Kidney (tissue), 22 donors: ENCODE measurements at regions of chr1 and their contacts with region 1.

Region 1: GRCh38 chr1:19651141-19651737 is 7.1 kb downstream of the NBL1 start:
- DNase-seq: peak in 4 of 5 donors; percentile 63 to 86 (median 75)
- H3K4me3 ChIP-seq: no peak overlapping the region
- H3K27ac ChIP-seq: peak overlapping the region in 1 of 2 donors; percentile 41
- H3K4me1 ChIP-seq: peaks cover 0 to 7% (median 0%) of the 10 kb centered on the region in 3 donors
- H3K27me3 ChIP-seq: no peaks in the 10 kb centered on the region
- CTCF ChIP-seq: peak; percentile 81

Region 2: GRCh38 chr1:19390901-19391595 is 260.2 kb before region 1 on chr1:
- intact Hi-C with region 1: loop called (anchors 10 kb)
- DNase-seq: peak; percentile 56 to 91 (median 78)
- H3K4me3 ChIP-seq: peak overlapping the region; percentile 6 to 36 (median 18)
- H3K27ac ChIP-seq: peak overlapping the region; percentile 9 to 39
- H3K4me1 ChIP-seq: peaks cover 0 to 26% (median 19%) of the 10 kb centered on the region in 3 donors
- H3K27me3 ChIP-seq: no peaks in the 10 kb centered on the region
- CTCF ChIP-seq: peak; percentile 91